Sciatic nerve (tissue), 2 donors: ENCODE measurements at regions of chr5 and their contacts with region 1.

Region 1: GRCh38 chr5:29614202-29614601 is 1579.3 kb upstream of the CDH6 start:
- DNase-seq: no peak
- ATAC-seq: no peak

Region 2: DNA sequence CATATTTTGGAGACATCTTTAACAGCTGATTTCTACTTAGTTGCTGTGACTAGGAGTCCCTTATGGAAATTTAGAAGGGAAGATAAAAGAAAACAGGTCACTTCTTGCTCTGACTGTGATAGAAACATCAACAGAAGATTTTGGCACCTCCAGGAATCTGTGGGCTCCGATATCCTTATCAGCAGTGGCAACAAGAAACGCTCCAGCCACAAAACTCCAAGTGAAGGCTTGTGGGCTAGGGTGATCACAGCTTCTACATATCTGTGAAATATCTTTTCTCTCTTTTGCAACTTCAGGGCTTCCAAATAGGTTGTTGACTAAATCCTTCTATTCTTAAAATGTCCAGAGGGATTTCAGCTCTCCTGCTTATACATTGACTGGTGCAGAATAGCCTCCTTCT is 46.2 kb before region 1 on chr5:
- intact Hi-C with region 1: no loop called
- DNase-seq: no peak
- ATAC-seq: no peak

Region 3: GRCh38 chr5:30142432-30142831 is 528.2 kb after region 1 on chr5:
- intact Hi-C with region 1: loop called (anchors 5 kb)
- DNase-seq: no peak
- ATAC-seq: no peak